GM12878 (cell line): ENCODE measurements at regions of chr2 and their contacts with region 1.

Region 1: DNA sequence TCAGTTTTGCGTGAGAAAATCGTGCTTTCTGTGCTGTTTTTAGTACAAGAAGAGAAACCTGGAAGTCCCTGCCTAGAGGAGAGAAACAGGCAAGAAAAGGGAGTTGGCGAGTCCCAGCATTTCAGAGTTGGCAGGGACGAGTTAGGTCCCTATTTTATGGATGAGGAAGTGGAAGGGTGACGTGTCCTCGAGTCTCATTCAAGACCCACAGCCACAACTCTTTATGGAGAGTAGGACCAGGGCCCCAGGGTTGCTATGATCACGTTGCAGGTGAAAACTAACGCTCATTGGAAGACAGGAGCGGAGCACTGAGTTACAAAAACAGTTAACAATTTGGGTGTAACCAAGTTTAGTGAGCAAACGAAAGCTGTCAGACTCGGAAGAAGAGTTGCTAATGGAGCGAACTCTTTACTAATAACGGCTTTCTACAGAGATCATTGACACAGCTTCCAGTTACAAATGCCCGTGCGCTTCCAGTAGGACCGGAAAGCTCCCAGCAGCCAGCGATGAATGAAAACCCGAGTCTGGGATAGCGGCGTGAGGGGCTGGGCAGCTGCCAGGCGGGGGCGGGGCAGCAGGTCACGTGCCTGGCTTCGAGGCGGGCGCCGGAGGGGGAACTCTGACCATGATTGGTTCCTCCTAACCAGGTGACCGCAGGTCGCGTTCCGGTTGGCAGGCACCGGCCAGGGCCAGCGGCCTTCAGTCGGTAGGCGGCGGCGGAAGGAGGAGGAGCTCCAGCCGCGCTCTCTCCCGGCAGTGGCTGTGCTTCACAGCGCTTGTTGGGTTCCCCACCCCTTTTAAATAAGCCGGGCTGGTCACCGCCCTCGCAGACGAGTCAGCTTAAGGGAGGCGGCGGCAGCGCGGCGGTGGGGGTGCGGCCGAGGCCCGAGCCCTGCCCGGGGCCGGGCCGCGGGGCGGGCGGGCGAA is at the start of gene CCNYL1:
- DNase-seq: peak; percentile 93
- ATAC-seq: peak; percentile 99
- H3K4me3 ChIP-seq: peak within 1 kb of the TSS; percentile 96
- H3K27ac ChIP-seq: peak within 1 kb of the TSS; percentile 75
- H3K4me1 ChIP-seq: no peaks in the 10 kb centered on the region
- H3K27me3 ChIP-seq: no peaks in the 10 kb centered on the region
- CTCF ChIP-seq: no peak
- EP300 ChIP-seq: no peak
- POLR2A ChIP-seq: peak; percentile 87
- RAD21 ChIP-seq: no peak
- polyA plus RNA-seq, gene CCNYL1: 2.4 to 3.7 TPM

Region 2: GRCh38 chr2:207655000-207655399 is 56.1 kb before region 1 on chr2:
- CTCF ChIA-PET with region 1: no interaction called
- POLR2A ChIA-PET with region 1: no interaction called
- RAD21 ChIA-PET with region 1: no interaction called
- SMC1A ChIA-PET with region 1: no interaction called
- in situ Hi-C with region 1: no loop called
- intact Hi-C with region 1: no loop called
- DNase-seq: no peak
- ATAC-seq: no peak
- H3K4me3 ChIP-seq: no peak overlapping the region
- H3K27ac ChIP-seq: no peak overlapping the region
- H3K4me1 ChIP-seq: no peaks in the 10 kb centered on the region
- H3K27me3 ChIP-seq: no peaks in the 10 kb centered on the region
- CTCF ChIP-seq: no peak
- EP300 ChIP-seq: no peak
- POLR2A ChIP-seq: no peak
- RAD21 ChIP-seq: no peak

Region 3: GRCh38 chr2:207725873-207726578 is 14.9 kb after region 1 on chr2:
- CTCF ChIA-PET with region 1: interaction called, 26 read pairs
- POLR2A ChIA-PET with region 1: interaction called, 84 read pairs
- RAD21 ChIA-PET with region 1: interaction called, 24 read pairs
- SMC1A ChIA-PET with region 1: interaction called, 23 read pairs
- in situ Hi-C with region 1: no loop called
- intact Hi-C with region 1: no loop called
- DNase-seq: no peak
- ATAC-seq: 0 out of 3 replicates have a peak, but pooled peaks have one; percentile 14
- H3K4me3 ChIP-seq: no peak overlapping the region
- H3K27ac ChIP-seq: no peak overlapping the region
- H3K4me1 ChIP-seq: peaks cover 3% of the 10 kb centered on the region; the same call in 1 of the 2 replicates
- H3K27me3 ChIP-seq: no peaks in the 10 kb centered on the region
- CTCF ChIP-seq: no peak
- EP300 ChIP-seq: no peak
- POLR2A ChIP-seq: no peak
- RAD21 ChIP-seq: no peak